Right cardiac atrium (tissue), 5 donors: ENCODE measurements at regions of chr6 and their contacts with region 1.

Region 1: DNA sequence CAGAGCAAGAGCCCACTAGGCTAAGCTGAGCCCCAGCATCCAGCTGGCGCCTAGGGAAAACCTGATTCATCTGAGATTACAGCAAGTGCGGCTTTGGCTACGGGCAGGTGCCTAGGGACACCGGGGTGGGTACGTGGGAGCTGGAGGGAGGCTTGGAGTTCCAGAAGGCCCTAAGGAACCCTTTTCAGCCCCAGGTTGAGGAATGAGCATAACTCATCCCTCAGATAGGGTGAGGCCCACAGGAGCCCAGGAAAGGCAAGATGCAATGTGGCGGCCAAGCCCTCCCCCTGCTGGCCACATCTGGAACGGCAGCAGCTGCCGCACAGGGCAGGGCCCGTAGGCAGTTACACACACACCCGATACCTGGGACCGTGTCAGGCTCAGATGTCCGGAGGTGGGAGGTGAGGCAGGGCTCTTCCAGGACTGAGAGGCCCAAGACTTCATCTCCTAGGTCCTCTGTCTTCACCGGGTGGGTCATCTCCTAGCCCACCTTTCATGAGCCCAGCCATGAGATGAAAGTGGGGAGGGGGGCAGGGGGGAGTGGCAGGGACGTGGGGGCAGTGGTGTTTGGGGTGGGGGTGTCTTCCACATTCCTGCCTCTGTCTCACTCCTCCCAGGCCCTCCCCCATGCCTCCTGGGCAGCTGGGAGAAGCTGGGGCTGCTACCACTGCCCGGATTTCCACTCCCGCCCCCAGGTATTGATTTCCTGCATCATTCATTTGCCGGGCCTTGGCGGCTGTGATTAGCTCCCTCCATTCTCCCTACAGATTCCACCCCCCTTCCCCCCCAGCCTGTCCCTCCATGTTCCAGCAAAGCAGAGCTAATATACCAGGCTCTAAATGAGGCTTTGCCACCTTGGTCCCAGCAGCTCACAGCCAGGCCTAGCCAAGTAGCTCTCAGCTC is 5.5 kb downstream of the MDGA1 start:
- DNase-seq: peak; percentile 63 to 91 (median 86)
- ATAC-seq: peak; percentile 66 to 82
- H3K4me3 ChIP-seq: no peak overlapping the region
- H3K27ac ChIP-seq: no peak overlapping the region
- H3K4me1 ChIP-seq: peaks cover 4% of the 10 kb centered on the region
- H3K27me3 ChIP-seq: no peaks in the 10 kb centered on the region

Region 2: DNA sequence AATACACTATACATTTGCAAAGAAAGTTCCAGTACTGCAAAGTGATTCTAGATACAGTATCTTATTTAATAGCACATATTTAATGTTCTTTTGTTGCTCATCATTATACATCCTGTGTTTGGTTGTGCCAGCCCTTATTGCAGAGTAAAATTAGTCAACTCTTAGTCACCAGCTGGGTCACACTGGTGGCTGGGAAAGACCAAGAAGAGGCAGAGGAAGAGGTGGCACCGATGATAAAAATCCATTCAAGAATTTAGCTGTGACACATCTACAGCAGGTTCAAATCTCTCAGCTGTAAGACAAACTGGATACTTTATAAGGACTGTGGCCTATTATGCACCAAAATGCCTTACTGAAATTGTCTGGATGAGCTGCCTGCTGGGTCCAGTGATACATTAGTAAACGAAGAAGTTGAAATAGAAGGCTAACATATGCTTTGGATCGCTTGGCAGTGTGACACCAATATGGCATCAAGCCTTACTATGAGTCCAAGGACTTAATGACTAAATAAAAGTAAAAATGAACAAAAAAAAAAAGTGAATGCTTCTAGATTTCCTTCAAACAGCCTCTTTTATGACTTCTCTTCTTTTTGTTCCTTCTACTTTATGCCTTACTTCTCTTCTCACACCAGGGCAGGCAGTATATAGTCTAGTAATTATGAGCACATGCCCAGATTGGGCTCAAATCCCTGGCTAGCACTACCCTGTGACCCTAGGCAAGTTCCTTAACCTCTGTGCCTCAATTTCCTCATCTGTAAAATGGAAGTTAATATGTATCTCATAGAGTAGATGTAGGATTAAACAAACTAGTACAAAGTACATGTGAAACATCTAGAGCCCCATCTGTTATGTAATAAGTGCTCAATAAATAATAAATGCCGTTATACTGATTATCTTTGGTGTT is 367.8 kb before region 1 on chr6:
- intact Hi-C with region 1: loop called in 2 of 4 experiments (anchors 10 kb)
- DNase-seq: no peak
- ATAC-seq: no peak
- H3K4me3 ChIP-seq: no peak overlapping the region
- H3K27ac ChIP-seq: no peak overlapping the region
- H3K4me1 ChIP-seq: no peaks in the 10 kb centered on the region
- H3K27me3 ChIP-seq: no peaks in the 10 kb centered on the region

Region 3: DNA sequence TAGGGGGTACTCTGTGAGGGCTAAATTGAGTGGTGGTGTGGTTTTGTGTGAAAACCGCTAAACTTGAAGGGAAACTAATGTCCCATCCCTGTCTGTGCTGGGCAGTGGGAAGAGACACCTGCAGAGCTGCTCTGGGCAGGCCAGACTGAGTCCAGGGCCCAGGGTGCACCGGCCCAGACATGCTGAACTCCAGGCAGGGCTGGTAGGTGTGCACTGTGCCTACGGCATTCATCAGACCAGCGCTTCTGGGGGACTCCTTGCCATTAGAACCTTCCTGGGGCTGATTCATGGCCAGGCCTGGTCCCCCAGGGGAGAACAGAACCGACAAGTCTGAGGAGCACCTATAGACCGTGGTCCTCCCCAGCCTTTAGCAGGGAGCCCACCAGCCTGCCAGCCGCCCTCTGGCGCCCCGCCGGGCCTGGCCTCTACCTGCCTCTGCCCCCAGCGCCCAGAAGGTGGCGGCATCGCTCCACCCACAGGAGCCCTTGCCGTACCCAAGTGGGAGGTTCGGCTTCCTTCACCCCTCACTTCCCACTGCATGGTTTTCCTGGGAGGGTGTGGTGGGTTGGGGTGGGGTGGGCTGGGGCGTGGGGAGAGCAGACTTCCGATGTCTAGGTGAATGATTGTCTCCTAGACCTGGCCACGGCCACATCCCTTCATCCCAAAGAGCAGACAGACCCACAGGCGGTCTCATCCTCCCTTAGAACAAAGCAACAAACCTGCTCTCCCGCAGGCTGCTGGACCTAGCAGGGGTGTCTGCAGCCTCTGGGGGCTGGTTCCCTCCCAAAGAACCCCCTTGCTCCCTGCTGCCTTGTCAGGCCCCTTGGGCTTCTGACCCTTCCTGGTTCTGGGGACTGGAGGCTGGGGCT is 208.0 kb before region 1 on chr6:
- intact Hi-C with region 1: loop called in 3 of 4 experiments (anchors 5 kb)
- DNase-seq: peak; percentile 53 to 86 (median 82)
- ATAC-seq: peak; percentile 52 to 65
- H3K4me3 ChIP-seq: no peak overlapping the region
- H3K27ac ChIP-seq: no peak overlapping the region
- H3K4me1 ChIP-seq: peaks cover 8% of the 10 kb centered on the region
- H3K27me3 ChIP-seq: no peaks in the 10 kb centered on the region

Region 4: GRCh38 chr6:37489660-37490361 is 202.3 kb before region 1 on chr6:
- intact Hi-C with region 1: loop called in 1 of 4 experiments (anchors 5 kb)
- DNase-seq: peak; percentile 37 to 73 (median 72)
- ATAC-seq: peak; percentile 40
- H3K4me3 ChIP-seq: no peak overlapping the region
- H3K27ac ChIP-seq: no peak overlapping the region
- H3K4me1 ChIP-seq: peaks cover 13% of the 10 kb centered on the region
- H3K27me3 ChIP-seq: no peaks in the 10 kb centered on the region

Region 5: DNA sequence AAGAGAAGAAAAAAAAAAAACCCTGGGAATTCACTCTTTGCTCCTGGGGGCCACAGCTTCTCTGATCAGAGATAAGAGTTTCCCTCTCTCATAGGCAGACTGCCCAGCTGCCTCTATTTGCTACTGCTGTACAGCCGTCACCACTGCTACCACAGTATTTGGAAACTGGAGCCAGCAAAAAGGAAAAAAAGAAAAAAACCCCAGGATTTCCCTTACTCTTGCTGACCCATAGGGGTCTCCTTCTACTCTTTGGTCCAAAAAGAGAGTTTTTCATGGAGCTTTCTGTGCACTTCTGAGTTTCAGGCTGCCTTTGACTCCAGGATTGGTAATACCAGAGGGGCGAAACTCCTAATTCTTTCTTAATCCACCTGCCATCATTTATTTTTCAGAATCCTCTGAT is 84.2 kb before region 1 on chr6:
- intact Hi-C with region 1: no loop called
- DNase-seq: no peak
- ATAC-seq: no peak
- H3K4me3 ChIP-seq: no peak overlapping the region
- H3K27ac ChIP-seq: no peak overlapping the region
- H3K4me1 ChIP-seq: no peaks in the 10 kb centered on the region
- H3K27me3 ChIP-seq: no peaks in the 10 kb centered on the region